Activated CD4-positive, alpha-beta T cell treated with anti-CD3 and anti-CD28 coated beads for 36 hours (primary cell): ENCODE measurements at regions of chr12 and their contacts with region 1.

Region 1: DNA sequence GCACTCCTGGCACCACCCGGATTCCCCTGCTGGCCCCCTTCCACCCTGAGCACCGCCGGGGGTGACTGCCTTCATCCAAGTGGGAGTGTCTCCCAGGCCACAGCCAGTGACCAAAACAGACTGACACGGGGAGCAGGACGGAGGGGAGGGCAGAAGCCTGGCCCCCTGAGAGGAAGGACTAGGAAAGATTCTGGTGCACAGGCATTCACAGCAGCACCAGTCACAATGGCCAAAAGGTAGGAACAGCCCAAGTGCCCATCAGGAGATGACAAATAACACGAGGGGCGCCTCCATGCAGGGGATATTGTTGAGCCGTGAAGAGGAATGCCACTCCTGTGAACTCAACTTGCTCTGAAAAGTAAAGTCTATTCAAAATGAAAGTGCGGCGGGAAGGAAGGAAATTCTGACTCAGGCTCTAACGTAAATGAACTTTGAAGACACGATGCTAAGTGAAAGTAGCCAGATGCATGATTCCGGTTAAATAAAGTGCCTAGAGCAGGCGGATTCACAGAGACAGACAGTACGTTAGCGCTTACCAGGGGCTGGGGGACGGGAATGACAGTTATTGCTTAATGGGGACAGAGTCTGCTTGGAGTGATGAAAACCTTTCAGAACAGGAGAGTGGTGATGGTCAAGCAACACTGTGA is 146.1 kb upstream of the NCOR2 start:
- DNase-seq: peak; percentile 74
- ATAC-seq: peak; percentile 96
- H3K4me3 Mint-ChIP-seq: peak overlapping the region; percentile 58
- H3K27ac Mint-ChIP-seq: peak overlapping the region; percentile 81
- H3K4me1 Mint-ChIP-seq: peaks cover 22% of the 10 kb centered on the region
- H3K27me3 Mint-ChIP-seq: peaks cover 2% of the 10 kb centered on the region

Region 2: GRCh38 chr12:124388679-124389536 is 324.7 kb before region 1 on chr12:
- CTCF ChIA-PET with region 1: no interaction called
- POLR2A ChIA-PET with region 1: no interaction called
- intact Hi-C with region 1: loop called in 1 of 2 experiments (anchors 2 kb)
- DNase-seq: peak; percentile 86
- ATAC-seq: peak; percentile 79
- H3K4me3 Mint-ChIP-seq: peak overlapping the region; percentile 44
- H3K27ac Mint-ChIP-seq: no peak overlapping the region
- H3K4me1 Mint-ChIP-seq: peaks cover 43% of the 10 kb centered on the region
- H3K27me3 Mint-ChIP-seq: no peaks in the 10 kb centered on the region

Region 3: GRCh38 chr12:124453419-124454351 is 259.9 kb before region 1 on chr12:
- CTCF ChIA-PET with region 1: no interaction called
- POLR2A ChIA-PET with region 1: no interaction called
- intact Hi-C with region 1: loop called (anchors 1 to 5 kb)
- DNase-seq: peak; percentile 93
- ATAC-seq: peak; percentile 90
- H3K4me3 Mint-ChIP-seq: peak overlapping the region; percentile 17
- H3K27ac Mint-ChIP-seq: peak overlapping the region; percentile 37
- H3K4me1 Mint-ChIP-seq: peaks cover 64% of the 10 kb centered on the region
- H3K27me3 Mint-ChIP-seq: no peaks in the 10 kb centered on the region

Region 4: DNA sequence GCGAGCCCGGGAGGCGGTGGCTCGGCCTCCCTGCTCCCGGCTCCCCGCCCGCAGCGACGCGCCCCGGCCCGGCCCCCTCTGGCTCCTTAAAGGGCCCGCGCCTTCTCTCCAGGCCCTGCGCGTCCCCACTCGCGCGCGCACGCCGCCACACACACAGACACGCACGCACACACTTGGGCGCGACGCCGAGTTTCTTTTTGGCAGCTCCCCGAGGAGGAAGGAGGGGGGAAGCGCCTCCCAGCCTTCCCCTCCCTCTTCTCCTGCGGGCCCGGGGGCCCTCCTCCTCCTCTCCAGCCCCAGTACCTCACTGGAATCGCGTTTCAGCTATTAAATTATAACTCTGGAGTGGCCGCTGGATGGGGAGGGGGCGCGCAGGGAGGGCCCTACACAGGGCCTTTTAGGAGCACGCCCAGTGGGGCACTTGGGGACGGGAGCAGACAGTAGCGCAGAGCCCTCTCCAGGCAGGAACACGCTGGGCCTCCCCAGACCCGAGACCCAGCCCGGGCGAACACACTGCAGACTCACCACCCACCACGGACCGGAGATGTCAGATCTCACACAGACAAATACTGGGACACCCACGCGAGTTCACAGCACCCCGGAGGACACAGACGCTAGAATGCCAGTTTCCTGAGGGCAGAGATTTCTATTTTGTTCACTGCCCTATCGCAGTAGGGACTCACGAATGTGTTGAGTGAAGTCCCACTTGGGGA is 145.7 kb before region 1 on chr12:
- CTCF ChIA-PET with region 1: no interaction called
- POLR2A ChIA-PET with region 1: no interaction called
- intact Hi-C with region 1: loop called (anchors 1 kb)
- DNase-seq: peak; percentile 89
- ATAC-seq: peak; percentile 72
- H3K4me3 Mint-ChIP-seq: peak overlapping the region; percentile 75
- H3K27ac Mint-ChIP-seq: peak overlapping the region; percentile 89
- H3K4me1 Mint-ChIP-seq: peaks cover 33% of the 10 kb centered on the region
- H3K27me3 Mint-ChIP-seq: no peaks in the 10 kb centered on the region

Region 5: DNA sequence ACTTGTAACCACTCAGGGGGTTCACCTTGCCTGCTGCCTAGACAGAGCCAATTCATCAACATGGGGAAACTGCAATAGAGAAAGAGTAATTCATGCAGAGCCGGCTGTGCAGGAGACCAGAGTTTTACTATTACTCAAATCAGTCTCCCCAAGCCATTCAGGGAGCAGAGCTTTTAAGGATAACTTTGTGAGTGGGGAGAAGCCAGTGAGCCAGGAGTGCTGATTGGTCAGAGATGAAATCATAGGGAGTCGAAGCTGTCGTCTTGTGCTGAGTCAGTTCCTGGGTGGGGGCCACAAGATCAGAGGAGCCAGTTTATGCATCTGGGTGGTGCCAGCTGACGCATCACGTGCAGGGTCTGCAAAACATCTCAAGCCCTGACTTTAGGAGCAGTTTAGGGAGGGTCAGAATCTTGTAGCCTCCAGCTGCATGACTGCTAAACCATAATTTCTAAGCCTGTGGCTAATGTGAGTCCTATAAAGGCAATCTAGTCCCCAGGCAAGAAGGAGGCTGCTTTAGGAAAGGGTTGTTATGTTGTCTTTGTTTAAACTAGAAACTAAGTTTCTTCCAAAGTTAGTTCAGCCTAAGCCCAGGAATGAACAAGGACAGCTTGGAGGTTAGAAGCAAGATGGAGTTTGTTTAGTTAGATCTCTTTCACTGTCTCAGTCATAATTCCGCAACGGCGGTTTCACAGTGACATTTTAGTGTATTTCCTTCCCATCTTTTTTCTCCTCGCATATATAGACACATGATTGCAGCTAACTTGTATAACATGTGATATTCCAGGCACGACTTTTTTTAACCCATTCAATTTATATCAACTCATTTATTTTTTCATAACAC is 77.2 kb before region 1 on chr12:
- CTCF ChIA-PET with region 1: interaction called, 3 read pairs
- POLR2A ChIA-PET with region 1: no interaction called
- intact Hi-C with region 1: loop called in 1 of 2 experiments (anchors 1 kb)
- DNase-seq: peak; percentile 83
- ATAC-seq: peak; percentile 85
- H3K4me3 Mint-ChIP-seq: no peak overlapping the region
- H3K27ac Mint-ChIP-seq: peak overlapping the region; percentile 30
- H3K4me1 Mint-ChIP-seq: peaks cover 16% of the 10 kb centered on the region
- H3K27me3 Mint-ChIP-seq: peaks cover 5% of the 10 kb centered on the region

Region 6: DNA sequence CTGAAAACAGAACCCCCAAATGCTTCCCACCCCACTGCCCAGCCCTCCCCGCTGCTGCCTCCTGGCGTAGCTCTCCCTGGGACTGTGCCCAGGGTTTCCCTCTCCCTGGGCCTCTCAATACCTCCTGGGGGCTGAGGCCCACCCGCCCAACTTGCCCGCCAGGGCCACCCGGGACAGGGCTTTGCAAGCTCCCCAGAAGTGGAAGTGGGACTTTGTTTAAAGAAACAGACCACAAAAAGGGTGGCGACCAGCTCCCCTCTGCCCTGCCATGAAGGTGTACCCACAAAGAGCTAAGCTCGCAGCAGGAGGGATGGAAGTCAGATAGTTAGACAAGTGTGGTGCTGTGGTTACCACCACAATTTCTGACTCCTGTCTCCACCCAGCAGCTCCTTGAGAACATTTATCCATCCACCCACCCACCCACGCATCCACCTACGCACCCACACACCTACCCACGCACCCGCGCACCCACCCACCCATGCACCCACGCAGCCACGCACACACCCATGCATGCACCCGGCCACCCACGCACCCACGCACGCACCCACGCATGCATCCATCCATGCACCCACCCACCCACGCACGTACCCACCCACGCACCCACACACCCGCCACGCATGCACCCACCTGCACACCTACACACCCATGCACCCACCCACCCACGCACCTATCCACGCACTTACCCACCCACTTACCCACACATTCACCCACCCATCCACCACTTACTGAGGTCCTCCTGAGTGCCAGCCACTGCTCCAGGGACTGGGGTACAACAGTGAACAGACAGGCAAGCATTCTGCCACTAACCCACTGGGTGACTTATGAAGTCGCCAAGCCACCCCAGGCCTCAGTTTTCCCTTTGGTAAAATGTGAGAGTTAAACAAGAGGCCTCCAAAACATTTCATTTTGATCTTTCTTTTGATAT is 22.8 kb after region 1 on chr12:
- CTCF ChIA-PET with region 1: no interaction called
- POLR2A ChIA-PET with region 1: no interaction called
- intact Hi-C with region 1: loop called in 1 of 2 experiments (anchors 1 kb)
- DNase-seq: peak; percentile 37
- ATAC-seq: peak; percentile 42
- H3K4me3 Mint-ChIP-seq: no peak overlapping the region
- H3K27ac Mint-ChIP-seq: no peak overlapping the region
- H3K4me1 Mint-ChIP-seq: peaks cover 44% of the 10 kb centered on the region
- H3K27me3 Mint-ChIP-seq: peaks cover 3% of the 10 kb centered on the region

Region 7: GRCh38 chr12:124759841-124760503 is 46.4 kb after region 1 on chr12:
- CTCF ChIA-PET with region 1: interaction called, 3 read pairs
- POLR2A ChIA-PET with region 1: no interaction called
- intact Hi-C with region 1: loop called in 1 of 2 experiments (anchors 1 kb)
- DNase-seq: no peak
- ATAC-seq: no peak
- H3K4me3 Mint-ChIP-seq: no peak overlapping the region
- H3K27ac Mint-ChIP-seq: no peak overlapping the region
- H3K4me1 Mint-ChIP-seq: peaks cover 35% of the 10 kb centered on the region
- H3K27me3 Mint-ChIP-seq: peaks cover 14% of the 10 kb centered on the region